Activated CD4-positive, alpha-beta T cell treated with anti-CD3 and anti-CD28 coated beads for 36 hours (primary cell): ENCODE measurements at regions of chr12 and their contacts with region 1.

Region 1: GRCh38 chr12:124774462-124775167 is 89.0 kb downstream of the SCARB1 start:
- DNase-seq: peak; percentile 92
- ATAC-seq: peak; percentile 89
- H3K4me3 Mint-ChIP-seq: peak overlapping the region; percentile 55
- H3K27ac Mint-ChIP-seq: peak overlapping the region; percentile 83
- H3K4me1 Mint-ChIP-seq: peaks cover 46% of the 10 kb centered on the region
- H3K27me3 Mint-ChIP-seq: peaks cover 12% of the 10 kb centered on the region

Region 2: DNA sequence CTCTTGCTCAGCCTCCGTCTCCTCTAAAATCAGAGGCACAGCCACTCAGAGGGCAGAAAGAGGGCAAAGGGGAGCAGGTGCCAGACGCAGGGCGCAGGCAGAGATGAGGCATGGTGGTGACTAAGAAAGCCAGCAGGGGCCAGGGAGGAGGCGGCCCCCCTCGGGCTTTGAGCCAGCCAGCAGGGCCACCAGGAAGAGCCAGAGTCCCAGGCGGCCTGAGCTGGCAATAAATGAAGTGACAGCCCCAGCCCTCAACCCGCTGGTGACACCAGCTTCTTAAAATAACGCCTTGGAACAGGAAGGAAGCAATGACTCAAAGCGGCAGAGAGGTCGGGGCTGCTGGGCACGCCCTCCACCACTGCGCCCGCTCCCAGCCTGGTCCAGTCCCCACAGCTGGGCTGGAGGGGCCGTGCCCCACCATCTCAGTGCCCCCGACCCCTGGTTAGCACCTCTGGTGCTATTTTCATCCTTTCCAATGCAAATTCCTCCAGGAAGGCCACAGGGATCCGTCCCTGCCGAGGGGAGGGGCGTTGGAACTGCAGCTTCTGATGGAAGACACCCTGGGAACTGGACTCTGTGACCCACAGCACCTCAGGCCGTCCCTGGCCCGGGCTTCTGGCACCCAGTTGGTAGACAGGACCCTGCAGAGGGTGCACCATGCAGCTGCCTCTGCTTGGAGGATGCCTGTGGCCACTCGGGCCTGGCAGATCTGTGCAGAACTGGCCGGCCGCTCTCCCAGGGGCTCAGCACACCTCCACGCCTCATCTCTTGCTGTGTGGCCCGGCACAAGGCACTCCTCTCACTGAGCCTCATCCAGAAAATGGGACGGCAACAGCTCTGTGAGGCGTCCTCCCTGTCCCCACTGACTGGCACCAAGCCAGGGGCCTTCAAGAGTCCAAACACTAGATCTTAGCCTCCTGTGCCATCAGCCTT is 320.9 kb before region 1 on chr12:
- CTCF ChIA-PET with region 1: interaction called, 5 read pairs
- POLR2A ChIA-PET with region 1: interaction called, 3 read pairs
- intact Hi-C with region 1: loop called (anchors 1 to 2 kb)
- DNase-seq: peak; percentile 93
- ATAC-seq: peak; percentile 90
- H3K4me3 Mint-ChIP-seq: peak overlapping the region; percentile 17
- H3K27ac Mint-ChIP-seq: peak overlapping the region; percentile 37
- H3K4me1 Mint-ChIP-seq: peaks cover 64% of the 10 kb centered on the region
- H3K27me3 Mint-ChIP-seq: no peaks in the 10 kb centered on the region

Region 3: DNA sequence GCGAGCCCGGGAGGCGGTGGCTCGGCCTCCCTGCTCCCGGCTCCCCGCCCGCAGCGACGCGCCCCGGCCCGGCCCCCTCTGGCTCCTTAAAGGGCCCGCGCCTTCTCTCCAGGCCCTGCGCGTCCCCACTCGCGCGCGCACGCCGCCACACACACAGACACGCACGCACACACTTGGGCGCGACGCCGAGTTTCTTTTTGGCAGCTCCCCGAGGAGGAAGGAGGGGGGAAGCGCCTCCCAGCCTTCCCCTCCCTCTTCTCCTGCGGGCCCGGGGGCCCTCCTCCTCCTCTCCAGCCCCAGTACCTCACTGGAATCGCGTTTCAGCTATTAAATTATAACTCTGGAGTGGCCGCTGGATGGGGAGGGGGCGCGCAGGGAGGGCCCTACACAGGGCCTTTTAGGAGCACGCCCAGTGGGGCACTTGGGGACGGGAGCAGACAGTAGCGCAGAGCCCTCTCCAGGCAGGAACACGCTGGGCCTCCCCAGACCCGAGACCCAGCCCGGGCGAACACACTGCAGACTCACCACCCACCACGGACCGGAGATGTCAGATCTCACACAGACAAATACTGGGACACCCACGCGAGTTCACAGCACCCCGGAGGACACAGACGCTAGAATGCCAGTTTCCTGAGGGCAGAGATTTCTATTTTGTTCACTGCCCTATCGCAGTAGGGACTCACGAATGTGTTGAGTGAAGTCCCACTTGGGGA is 206.8 kb before region 1 on chr12:
- CTCF ChIA-PET with region 1: no interaction called
- POLR2A ChIA-PET with region 1: no interaction called
- intact Hi-C with region 1: loop called (anchors 1 to 5 kb)
- DNase-seq: peak; percentile 89
- ATAC-seq: peak; percentile 72
- H3K4me3 Mint-ChIP-seq: peak overlapping the region; percentile 75
- H3K27ac Mint-ChIP-seq: peak overlapping the region; percentile 89
- H3K4me1 Mint-ChIP-seq: peaks cover 33% of the 10 kb centered on the region
- H3K27me3 Mint-ChIP-seq: no peaks in the 10 kb centered on the region

Region 4: GRCh38 chr12:124759841-124760503 is 14.6 kb before region 1 on chr12:
- CTCF ChIA-PET with region 1: interaction called, 20 read pairs
- POLR2A ChIA-PET with region 1: interaction called, 4 read pairs
- intact Hi-C with region 1: loop called (anchors 1 kb)
- DNase-seq: no peak
- ATAC-seq: no peak
- H3K4me3 Mint-ChIP-seq: no peak overlapping the region
- H3K27ac Mint-ChIP-seq: no peak overlapping the region
- H3K4me1 Mint-ChIP-seq: peaks cover 35% of the 10 kb centered on the region
- H3K27me3 Mint-ChIP-seq: peaks cover 14% of the 10 kb centered on the region

Region 5: DNA sequence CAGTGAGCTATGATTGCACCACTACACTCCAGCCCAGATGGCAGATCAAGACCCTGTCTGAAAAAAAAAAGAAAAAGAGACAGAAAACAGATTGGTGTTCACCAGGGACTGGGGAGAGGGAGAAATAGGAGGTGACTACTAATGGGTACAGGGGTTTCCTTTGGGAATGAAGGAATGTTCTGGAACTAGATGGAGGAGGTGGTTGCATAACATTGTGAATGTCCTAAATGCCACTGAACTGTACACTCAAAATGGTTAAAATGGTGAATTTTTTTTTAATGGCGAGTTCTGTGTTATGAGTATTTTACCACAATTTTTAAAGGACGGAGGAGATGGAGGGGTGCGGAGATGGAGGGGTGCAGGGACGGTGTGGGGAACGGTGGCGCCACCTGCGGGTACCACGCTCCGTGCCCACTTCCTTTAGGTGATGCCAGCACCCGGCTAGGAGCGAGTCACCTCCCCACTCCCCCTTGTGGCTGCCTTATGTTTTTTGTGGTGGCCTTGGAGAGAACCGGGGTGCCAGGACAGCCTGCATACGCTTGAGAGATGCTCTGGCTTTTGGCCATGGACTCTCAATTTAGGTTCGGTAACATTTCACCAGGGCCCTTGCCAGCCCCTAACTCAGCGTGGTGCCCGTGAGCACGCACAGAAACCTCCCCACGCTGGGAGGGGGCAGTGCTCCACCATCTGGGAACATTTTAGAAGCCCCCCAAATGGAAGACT is 123.7 kb after region 1 on chr12:
- CTCF ChIA-PET with region 1: interaction called, 4 read pairs
- POLR2A ChIA-PET with region 1: no interaction called
- intact Hi-C with region 1: loop called (anchors 2 to 5 kb)
- DNase-seq: peak; percentile 89
- ATAC-seq: peak; percentile 94
- H3K4me3 Mint-ChIP-seq: no peak overlapping the region
- H3K27ac Mint-ChIP-seq: no peak overlapping the region
- H3K4me1 Mint-ChIP-seq: peaks cover 16% of the 10 kb centered on the region
- H3K27me3 Mint-ChIP-seq: no peaks in the 10 kb centered on the region

Region 6: GRCh38 chr12:124928912-124929530 is 154.4 kb after region 1 on chr12:
- CTCF ChIA-PET with region 1: no interaction called
- POLR2A ChIA-PET with region 1: no interaction called
- intact Hi-C with region 1: no loop called
- DNase-seq: no peak
- ATAC-seq: no peak
- H3K4me3 Mint-ChIP-seq: peak overlapping the region; percentile 98
- H3K27ac Mint-ChIP-seq: peak overlapping the region; percentile 97
- H3K4me1 Mint-ChIP-seq: peaks cover 29% of the 10 kb centered on the region
- H3K27me3 Mint-ChIP-seq: peaks cover 2% of the 10 kb centered on the region